BJ (cell line): ENCODE measurements at regions of chr5 and their contacts with region 1.

Region 1: GRCh38 chr5:141691867-141692532 is 10.0 kb upstream of the ARAP3 start:
- DNase-seq: peak; percentile 15
- H3K4me3 ChIP-seq: peak overlapping the region; percentile 37
- H3K27me3 ChIP-seq: peaks cover 17% of the 10 kb centered on the region
- CTCF ChIP-seq: peak; percentile 97

Region 2: GRCh38 chr5:141664732-141665461 is 27.1 kb before region 1 on chr5:
- CTCF ChIA-PET with region 1: interaction called, 20 read pairs
- POLR2A ChIA-PET with region 1: no interaction called
- DNase-seq: no peak
- H3K4me3 ChIP-seq: no peak overlapping the region
- H3K27me3 ChIP-seq: no peaks in the 10 kb centered on the region
- CTCF ChIP-seq: peak; percentile 96

Region 3: DNA sequence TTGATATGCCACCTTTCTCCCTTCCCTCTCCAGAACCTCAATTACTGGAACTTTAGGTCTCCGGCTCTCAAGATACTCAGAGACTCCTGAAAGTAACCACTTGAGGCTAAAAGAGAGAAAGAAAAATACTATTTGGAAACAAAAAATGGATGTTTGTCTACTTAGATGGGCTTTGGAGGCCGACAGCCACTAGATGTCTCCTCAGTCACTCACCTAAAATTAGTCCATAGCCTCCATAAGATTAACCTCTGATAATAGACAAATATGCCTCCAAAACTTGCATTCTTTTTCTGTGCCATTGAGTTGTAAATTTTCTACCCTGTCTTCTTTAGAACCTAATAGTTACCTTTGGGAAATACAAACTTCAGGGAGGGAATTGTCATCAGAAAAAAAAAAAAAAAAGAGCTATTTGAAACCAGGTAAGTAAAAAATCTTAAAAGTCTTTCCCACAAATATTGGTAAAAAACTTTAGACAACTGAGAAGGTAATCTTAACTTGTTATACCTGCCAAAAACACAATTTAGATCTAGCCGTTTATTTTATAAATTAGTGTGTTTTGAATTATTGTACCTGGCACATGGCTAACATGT is 197.4 kb after region 1 on chr5:
- CTCF ChIA-PET with region 1: interaction called, 341 read pairs
- POLR2A ChIA-PET with region 1: no interaction called
- DNase-seq: no peak
- H3K4me3 ChIP-seq: no peak overlapping the region
- H3K27me3 ChIP-seq: no peaks in the 10 kb centered on the region
- CTCF ChIP-seq: peak; percentile 61

Region 4: DNA sequence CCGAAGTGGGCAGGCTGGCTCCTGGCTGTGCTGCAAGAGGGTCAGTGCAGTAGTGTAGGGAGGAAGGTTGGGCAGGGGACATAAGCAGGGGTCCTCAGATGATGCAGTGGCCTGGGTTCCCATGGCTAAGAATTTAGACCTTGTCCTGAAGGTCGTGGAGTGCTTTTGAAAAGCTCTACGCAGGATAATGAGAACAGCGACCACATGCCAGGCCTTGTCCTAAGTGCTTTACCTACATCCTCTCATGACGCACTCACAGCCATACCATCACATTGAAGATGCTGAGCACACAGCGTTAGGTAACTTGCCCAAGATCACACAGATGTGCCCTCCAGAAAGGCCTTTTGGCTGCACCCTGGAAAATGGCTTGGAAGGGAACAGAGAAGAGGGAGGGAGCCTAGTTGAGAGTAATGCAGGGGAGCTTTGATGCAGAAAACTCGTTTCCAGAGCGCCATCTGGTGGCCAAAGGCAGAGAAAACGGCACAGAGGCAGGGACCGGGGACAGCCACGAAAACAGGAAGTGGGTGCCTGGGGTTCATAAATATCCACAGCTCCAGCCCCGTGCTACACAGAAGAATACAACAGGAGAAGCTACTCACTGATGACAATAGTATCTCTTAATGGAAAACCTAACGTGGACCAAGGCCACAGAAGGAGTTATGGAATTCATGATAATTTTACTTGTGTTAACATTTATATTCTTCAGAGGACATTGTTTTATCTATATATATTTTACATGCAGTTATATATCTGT is 268.6 kb after region 1 on chr5:
- CTCF ChIA-PET with region 1: interaction called, 293 read pairs
- POLR2A ChIA-PET with region 1: no interaction called
- DNase-seq: no peak
- H3K4me3 ChIP-seq: no peak overlapping the region
- H3K27me3 ChIP-seq: no peaks in the 10 kb centered on the region
- CTCF ChIP-seq: peak; percentile 82

Region 5: DNA sequence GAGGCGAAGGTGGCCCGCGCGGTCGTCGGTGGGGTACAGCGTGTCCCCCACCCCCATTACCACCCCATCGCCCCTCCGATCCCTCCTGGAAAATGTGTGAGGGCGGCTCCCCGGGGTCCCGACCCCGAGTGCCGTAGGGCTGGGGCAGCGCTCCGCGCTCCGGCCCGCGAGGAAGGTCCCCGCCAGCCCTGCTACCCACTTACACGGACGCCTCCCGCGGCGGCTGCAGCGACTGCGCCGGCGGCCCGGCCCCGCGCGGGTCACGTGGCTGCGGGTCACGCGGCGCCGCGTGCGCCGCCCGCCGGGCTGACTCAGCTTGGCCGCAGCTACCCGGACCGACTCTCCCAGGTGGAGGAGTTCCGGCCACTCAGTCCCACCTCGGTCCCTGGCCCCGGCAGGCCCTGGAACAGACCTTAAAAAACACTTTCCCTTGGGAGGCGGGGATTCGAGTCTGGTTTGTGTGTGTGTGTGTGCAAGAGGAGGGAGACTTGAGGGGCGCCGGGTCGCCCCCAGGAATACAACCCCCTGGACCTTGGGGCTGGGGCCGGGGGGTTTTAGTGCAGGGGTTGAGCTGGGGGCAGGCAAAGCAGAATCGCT is 320.9 kb after region 1 on chr5 and contains the start of gene GNPDA1:
- CTCF ChIA-PET with region 1: interaction called, 19 read pairs
- POLR2A ChIA-PET with region 1: no interaction called
- DNase-seq: no peak
- H3K4me3 ChIP-seq: peak within 1 kb of the TSS; percentile 68
- H3K27me3 ChIP-seq: peaks cover under 1% of the 10 kb centered on the region; the same call in 1 of the 2 replicates
- CTCF ChIP-seq: no peak
- polyA plus RNA-seq, gene GNPDA1: 12.5 TPM in 2 replicates